GM12878 (cell line): ENCODE measurements at regions of chr9 and their contacts with region 1.

Region 1: GRCh38 chr9:8085986-8086385 is 286.4 kb upstream of the DMAC1 start:
- DNase-seq: no peak
- ATAC-seq: no peak
- H3K4me3 ChIP-seq: no peak overlapping the region
- H3K27ac ChIP-seq: no peak overlapping the region
- H3K4me1 ChIP-seq: no peaks in the 10 kb centered on the region
- H3K27me3 ChIP-seq: no peaks in the 10 kb centered on the region
- CTCF ChIP-seq: no peak
- EP300 ChIP-seq: no peak
- POLR2A ChIP-seq: no peak
- RAD21 ChIP-seq: no peak

Region 2: GRCh38 chr9:7849362-7849761 is 236.6 kb before region 1 on chr9:
- CTCF ChIA-PET with region 1: interaction called, 4 read pairs
- POLR2A ChIA-PET with region 1: no interaction called
- RAD21 ChIA-PET with region 1: no interaction called
- SMC1A ChIA-PET with region 1: no interaction called
- in situ Hi-C with region 1: no loop called
- intact Hi-C with region 1: loop called (anchors 5 kb)
- DNase-seq: no peak
- ATAC-seq: no peak
- H3K4me3 ChIP-seq: no peak overlapping the region
- H3K27ac ChIP-seq: no peak overlapping the region
- H3K4me1 ChIP-seq: no peaks in the 10 kb centered on the region
- H3K27me3 ChIP-seq: no peaks in the 10 kb centered on the region
- CTCF ChIP-seq: no peak
- EP300 ChIP-seq: no peak
- POLR2A ChIP-seq: no peak
- RAD21 ChIP-seq: no peak

Region 3: DNA sequence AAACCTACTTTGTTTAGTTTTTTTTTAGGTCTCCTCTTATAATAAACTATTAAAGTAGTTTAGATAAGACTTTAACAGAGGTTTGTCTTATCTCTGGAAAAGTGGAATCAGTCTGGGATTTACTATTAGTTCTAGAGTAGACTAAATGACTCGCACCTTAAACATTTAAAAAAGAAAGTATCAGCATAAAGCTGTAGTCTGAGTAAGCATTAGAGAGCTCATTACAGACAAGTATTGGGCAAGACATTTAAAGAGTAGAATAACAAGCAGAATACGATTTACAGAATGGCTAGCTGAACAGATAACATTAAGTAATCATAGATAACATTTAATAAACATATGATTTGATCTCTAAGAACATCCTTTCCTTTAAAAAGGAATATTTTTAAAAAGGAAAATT is 60.4 kb before region 1 on chr9:
- CTCF ChIA-PET with region 1: no interaction called
- POLR2A ChIA-PET with region 1: no interaction called
- RAD21 ChIA-PET with region 1: no interaction called
- SMC1A ChIA-PET with region 1: no interaction called
- in situ Hi-C with region 1: no loop called
- intact Hi-C with region 1: loop called (anchors 10 kb)
- DNase-seq: no peak
- ATAC-seq: no peak
- H3K4me3 ChIP-seq: no peak overlapping the region
- H3K27ac ChIP-seq: no peak overlapping the region
- H3K4me1 ChIP-seq: no peaks in the 10 kb centered on the region
- H3K27me3 ChIP-seq: no peaks in the 10 kb centered on the region
- CTCF ChIP-seq: no peak
- EP300 ChIP-seq: no peak
- POLR2A ChIP-seq: no peak
- RAD21 ChIP-seq: no peak

Region 4: DNA sequence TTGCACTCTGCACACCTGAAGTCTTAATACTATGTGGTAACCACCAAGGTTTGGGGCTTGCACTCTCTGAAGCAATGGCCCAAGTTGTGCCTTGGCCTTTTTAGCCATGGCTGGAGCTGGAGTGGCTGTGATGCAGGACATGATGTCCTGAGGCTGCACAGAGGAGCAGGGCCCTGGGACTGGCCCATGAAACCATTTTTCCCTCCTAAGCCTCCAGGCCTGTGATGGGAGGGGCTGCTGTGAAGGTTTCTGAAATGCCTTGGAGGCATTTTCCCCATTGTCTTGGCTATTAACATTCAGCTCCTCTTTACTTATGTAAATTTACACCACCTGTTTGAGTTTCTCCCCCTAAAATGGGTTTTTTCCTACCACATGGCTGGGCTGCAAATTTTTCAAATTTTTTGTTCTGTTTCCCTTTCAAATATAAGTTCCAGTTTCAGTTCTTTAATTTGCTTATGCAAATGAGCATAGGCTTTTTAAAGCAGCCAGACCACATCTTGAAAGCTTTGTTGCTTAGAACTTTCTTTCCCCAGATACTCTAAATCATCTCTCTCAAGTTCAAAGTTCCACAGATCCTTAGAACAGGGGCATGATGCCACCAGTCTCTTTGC is 49.0 kb before region 1 on chr9:
- CTCF ChIA-PET with region 1: no interaction called
- POLR2A ChIA-PET with region 1: no interaction called
- RAD21 ChIA-PET with region 1: no interaction called
- SMC1A ChIA-PET with region 1: no interaction called
- in situ Hi-C with region 1: no loop called
- intact Hi-C with region 1: no loop called
- DNase-seq: no peak
- ATAC-seq: no peak
- H3K4me3 ChIP-seq: no peak overlapping the region
- H3K27ac ChIP-seq: no peak overlapping the region
- H3K4me1 ChIP-seq: no peaks in the 10 kb centered on the region
- H3K27me3 ChIP-seq: no peaks in the 10 kb centered on the region
- CTCF ChIP-seq: no peak
- EP300 ChIP-seq: no peak
- POLR2A ChIP-seq: no peak
- RAD21 ChIP-seq: no peak